ENCODE measurements at regions of chr1 and their contacts with region 1.

Region 1: DNA sequence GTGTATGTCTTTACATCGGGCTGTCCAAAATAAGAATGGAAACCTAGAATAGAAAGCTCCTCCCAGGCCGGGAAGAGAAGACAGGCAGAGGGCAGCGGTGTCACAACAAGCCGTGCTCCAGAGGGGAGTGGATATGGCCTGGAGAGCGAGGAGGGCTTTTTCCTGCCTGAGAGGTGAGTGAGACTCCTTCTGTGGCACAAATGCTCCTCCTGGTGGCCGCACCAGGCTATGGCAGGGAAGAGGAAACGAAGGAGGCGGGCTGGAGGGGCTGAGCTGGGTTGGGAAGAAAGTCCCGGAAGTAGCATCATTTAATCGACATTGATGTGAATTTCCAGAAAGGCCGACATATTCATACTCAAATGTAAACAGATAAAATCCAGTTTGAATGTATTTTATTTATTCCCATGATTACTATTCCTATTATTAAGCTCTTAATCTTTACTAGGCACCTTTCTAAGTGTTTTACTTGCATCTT is 54.7 kb downstream of the MEF2D start:
- DNase-seq: peak; percentile 87 to 90
- ATAC-seq: peak; percentile 92 to 95
- H3K4me3 ChIP-seq: no peak overlapping the region
- H3K27ac ChIP-seq: peak overlapping the region; percentile 54 to 71; a peak in 5 of 6 replicates
- H3K4me1 ChIP-seq: 0 out of 3 replicates have a peak, but pooled peaks cover 3% of the 10 kb centered on the region
- CTCF ChIP-seq: peak; percentile 92
- EP300 ChIP-seq: no peak
- POLR2A ChIP-seq: no peak
- RAD21 ChIP-seq: peak; percentile 92 to 96

Region 2: GRCh38 chr1:155873860-155874259 is 572.0 kb before region 1 on chr1:
- CTCF ChIA-PET with region 1: no interaction called
- POLR2A ChIA-PET with region 1: no interaction called
- DNase-seq: no peak
- ATAC-seq: no peak
- H3K4me3 ChIP-seq: no peak overlapping the region
- H3K27ac ChIP-seq: no peak overlapping the region
- H3K4me1 ChIP-seq: no peaks in the 10 kb centered on the region
- CTCF ChIP-seq: no peak
- EP300 ChIP-seq: no peak
- POLR2A ChIP-seq: no peak
- RAD21 ChIP-seq: no peak

Region 3: DNA sequence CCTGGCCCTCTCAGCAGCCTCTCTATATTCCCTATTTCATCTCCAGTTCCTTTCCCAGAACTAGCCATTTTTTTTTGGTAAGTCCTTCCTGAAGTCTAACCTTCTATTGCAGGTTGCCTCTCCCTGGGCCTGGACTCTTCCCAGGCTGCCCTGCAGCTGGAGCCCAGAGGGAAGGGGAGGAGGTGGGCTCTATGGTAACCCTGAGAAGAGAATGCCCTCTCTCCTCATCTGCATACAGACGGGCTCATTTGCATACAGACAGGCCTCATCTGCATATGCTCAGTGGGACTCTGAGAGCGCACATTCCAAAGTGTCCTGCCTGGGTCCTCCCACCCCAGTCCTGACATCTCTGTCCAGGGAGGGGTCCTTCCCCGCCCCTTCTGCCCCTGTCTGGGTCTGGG is 44.1 kb before region 1 on chr1:
- CTCF ChIA-PET with region 1: interaction called, 543 read pairs
- POLR2A ChIA-PET with region 1: no interaction called
- DNase-seq: no peak
- ATAC-seq: no peak
- H3K4me3 ChIP-seq: no peak overlapping the region
- H3K27ac ChIP-seq: peak overlapping the region in 1 of 2 experiments; percentile 63; a peak in 2 of 6 replicates
- H3K4me1 ChIP-seq: peaks cover 12% of the 10 kb centered on the region
- CTCF ChIP-seq: no peak
- EP300 ChIP-seq: no peak
- POLR2A ChIP-seq: no peak
- RAD21 ChIP-seq: no peak

Region 4: GRCh38 chr1:156414461-156415064 is 31.3 kb before region 1 on chr1:
- CTCF ChIA-PET with region 1: interaction called, 26 read pairs
- POLR2A ChIA-PET with region 1: no interaction called
- DNase-seq: no peak
- ATAC-seq: no peak
- H3K4me3 ChIP-seq: no peak overlapping the region
- H3K27ac ChIP-seq: no peak overlapping the region
- H3K4me1 ChIP-seq: peaks cover 5% of the 10 kb centered on the region; the same call in 1 of the 3 replicates
- CTCF ChIP-seq: no peak
- EP300 ChIP-seq: no peak
- POLR2A ChIP-seq: no peak
- RAD21 ChIP-seq: no peak

Region 5: GRCh38 chr1:156429313-156430060 is 16.3 kb before region 1 on chr1:
- CTCF ChIA-PET with region 1: interaction called, 67 read pairs
- POLR2A ChIA-PET with region 1: no interaction called
- DNase-seq: no peak
- ATAC-seq: no peak
- H3K4me3 ChIP-seq: no peak overlapping the region
- H3K27ac ChIP-seq: no peak overlapping the region
- H3K4me1 ChIP-seq: no peaks in the 10 kb centered on the region
- CTCF ChIP-seq: no peak
- EP300 ChIP-seq: no peak
- POLR2A ChIP-seq: no peak
- RAD21 ChIP-seq: no peak

Region 6: DNA sequence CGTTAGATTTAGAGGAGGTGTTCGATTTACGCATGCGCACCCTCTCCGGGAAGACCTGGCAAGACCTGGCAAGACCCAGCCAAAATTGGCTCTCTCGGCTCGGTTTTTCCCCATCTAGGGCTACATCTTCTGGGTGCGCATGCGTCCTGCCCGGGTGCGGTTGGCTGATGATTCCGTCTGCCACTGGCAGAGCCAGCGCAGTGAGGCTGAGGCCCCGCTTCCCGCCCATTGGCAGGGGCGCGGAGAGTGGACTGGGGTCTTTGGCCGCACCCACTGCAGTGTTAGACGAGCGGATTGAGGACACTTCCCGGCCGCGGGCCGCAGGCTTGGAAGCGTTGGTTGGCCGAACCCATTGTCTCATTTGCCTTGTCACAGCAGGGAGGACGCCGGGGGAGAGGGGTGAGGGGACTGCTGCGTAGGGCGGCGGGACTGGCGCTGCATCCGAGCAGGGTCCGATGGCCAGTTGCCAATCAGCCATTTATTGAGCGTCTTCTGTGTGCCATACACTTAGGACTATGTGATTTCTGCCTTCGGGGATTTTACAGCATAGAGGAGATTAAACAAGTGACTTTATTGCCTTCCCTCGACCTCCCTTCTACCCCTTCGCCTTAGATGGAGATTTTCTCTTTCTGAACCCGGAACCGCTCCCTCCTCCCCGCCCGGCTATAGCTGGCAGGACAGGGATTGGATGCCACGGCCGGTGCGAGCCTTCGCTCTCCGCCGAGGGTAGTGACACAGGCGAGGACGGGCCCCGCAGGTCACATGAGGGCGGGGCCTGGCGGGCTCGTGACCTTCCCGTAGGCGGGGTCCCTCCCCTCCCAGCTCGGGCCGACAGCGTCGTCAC is 11.0 kb after region 1 on chr1:
- CTCF ChIA-PET with region 1: interaction called, 48 read pairs
- POLR2A ChIA-PET with region 1: interaction called, 5 read pairs
- DNase-seq: peak; percentile 99
- ATAC-seq: peak; percentile 80 to 90
- H3K4me3 ChIP-seq: peak overlapping the region; percentile 60
- H3K27ac ChIP-seq: peak overlapping the region; percentile 97 to 98
- H3K4me1 ChIP-seq: peaks cover 13% of the 10 kb centered on the region
- CTCF ChIP-seq: no peak
- EP300 ChIP-seq: no peak
- POLR2A ChIP-seq: peak; percentile 89
- RAD21 ChIP-seq: no peak

Region 7: GRCh38 chr1:156608036-156608674 is 162.3 kb after region 1 on chr1:
- CTCF ChIA-PET with region 1: interaction called, 15 read pairs
- POLR2A ChIA-PET with region 1: no interaction called
- DNase-seq: peak; percentile 67 to 84
- ATAC-seq: peak; percentile 98 to 99
- H3K4me3 ChIP-seq: no peak overlapping the region
- H3K27ac ChIP-seq: peak overlapping the region; percentile 41 to 70; a peak in 4 of 6 replicates
- H3K4me1 ChIP-seq: peaks cover 8% of the 10 kb centered on the region; the same call in 2 of the 3 replicates
- CTCF ChIP-seq: peak; percentile 83
- EP300 ChIP-seq: no peak
- POLR2A ChIP-seq: no peak
- RAD21 ChIP-seq: peak; percentile 71 to 76